Activated CD4-positive, alpha-beta T cell treated with anti-CD3 and anti-CD28 coated beads for 36 hours (primary cell): ENCODE measurements at regions of chr17 and their contacts with region 1.

Region 1: DNA sequence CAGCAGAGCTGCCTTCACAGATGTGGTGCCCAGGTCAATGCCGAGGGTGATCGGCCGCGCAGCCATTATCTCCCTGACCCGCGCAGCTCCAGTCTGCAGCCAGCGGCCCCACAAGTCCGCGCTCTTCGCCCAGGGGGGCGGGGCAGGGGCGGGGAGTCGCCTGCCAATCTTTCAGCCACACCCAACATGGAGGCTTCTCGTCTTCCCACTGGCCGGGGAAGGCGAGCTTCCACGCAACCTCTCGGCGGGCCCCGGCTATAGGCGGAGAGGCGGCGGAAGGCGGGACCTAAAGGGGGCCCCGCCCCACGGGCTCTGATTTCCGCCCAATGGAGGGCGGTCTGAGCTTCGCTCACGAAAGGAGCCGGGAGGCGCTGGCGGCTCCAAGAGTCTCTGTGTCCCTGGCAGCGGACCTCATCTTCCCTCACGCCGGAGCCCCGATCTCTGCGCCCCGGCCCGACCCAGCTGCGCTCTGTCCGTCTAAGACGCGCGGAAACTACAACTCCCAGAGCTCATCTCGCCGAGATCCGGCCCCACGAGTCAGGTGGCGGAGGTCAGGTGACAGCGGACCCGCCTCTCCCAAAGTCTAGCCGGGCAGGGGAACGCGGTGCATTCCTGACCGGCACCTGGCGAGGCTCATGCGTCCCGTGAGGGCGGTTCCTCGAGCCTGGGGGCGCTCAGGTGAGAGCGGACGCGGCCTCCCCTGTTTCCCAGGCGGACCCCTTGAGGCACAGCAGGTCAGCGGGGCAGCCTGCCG is at the starts of genes CTNS and SHPK:
- DNase-seq: peak; percentile 97
- ATAC-seq: peak; percentile 97
- H3K4me3 Mint-ChIP-seq: peak within 1 kb of the TSS; percentile 93
- H3K27ac Mint-ChIP-seq: peak within 1 kb of the TSS; percentile 99
- H3K4me1 Mint-ChIP-seq: peaks cover 42% of the 10 kb centered on the region
- H3K27me3 Mint-ChIP-seq: no peaks in the 10 kb centered on the region
- total RNA-seq, gene CTNS: 10.1 to 11.1 TPM
- total RNA-seq, gene SHPK: 12.5 to 15.0 TPM

Region 2: DNA sequence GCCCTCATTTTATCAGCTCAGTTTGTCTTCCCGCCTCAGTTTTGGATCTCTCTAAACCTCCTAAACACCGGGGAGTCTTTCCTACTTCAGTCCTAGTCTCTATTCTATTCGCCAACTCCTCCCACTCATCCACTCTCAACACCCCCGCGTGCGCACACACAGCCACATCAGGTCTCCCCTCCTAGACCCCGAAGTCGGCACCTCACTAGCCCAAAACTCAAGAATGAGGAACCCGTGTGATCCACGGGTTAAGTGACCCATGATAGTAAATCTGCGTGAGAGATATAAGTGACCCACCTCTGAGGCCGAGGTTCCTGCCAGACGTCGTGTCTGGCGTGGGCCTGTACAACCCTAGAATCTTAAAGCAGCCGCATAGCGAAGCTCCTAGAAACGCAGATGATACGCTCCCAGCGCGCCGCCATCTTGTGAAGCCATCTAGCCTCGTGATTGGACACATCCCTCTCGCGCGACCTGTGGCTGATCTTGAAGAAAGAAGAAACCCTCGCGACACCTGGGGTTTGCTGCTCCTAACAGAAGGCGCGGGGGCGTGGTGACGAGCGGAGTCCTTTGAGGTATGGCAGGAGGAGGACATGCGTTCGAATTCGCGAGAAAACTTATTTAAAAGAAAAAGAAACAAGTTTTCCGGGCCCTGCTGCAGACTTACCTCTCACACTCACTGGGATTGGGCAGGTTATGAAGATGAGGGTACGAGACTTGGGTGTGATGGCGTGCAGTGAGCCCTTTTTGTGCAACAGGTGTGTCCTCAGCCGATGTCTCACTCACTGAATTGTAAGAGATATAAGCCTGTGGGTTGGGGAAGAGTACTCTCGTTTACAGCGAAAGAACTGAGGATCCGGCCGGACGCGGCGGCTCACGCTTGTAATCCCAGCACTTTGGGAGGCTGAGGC is 1124.6 kb before region 1 on chr17 and contains the start of gene METTL16:
- CTCF ChIA-PET with region 1: no interaction called
- POLR2A ChIA-PET with region 1: no interaction called
- intact Hi-C with region 1: loop called in 1 of 2 experiments (anchors 5 kb)
- DNase-seq: peak; percentile 100
- ATAC-seq: peak; percentile 99
- H3K4me3 Mint-ChIP-seq: no peak within 1 kb of the TSS
- H3K27ac Mint-ChIP-seq: no peak within 1 kb of the TSS
- H3K4me1 Mint-ChIP-seq: peaks cover 17% of the 10 kb centered on the region
- H3K27me3 Mint-ChIP-seq: no peaks in the 10 kb centered on the region
- total RNA-seq, gene METTL16: 50.1 to 61.6 TPM

Region 3: DNA sequence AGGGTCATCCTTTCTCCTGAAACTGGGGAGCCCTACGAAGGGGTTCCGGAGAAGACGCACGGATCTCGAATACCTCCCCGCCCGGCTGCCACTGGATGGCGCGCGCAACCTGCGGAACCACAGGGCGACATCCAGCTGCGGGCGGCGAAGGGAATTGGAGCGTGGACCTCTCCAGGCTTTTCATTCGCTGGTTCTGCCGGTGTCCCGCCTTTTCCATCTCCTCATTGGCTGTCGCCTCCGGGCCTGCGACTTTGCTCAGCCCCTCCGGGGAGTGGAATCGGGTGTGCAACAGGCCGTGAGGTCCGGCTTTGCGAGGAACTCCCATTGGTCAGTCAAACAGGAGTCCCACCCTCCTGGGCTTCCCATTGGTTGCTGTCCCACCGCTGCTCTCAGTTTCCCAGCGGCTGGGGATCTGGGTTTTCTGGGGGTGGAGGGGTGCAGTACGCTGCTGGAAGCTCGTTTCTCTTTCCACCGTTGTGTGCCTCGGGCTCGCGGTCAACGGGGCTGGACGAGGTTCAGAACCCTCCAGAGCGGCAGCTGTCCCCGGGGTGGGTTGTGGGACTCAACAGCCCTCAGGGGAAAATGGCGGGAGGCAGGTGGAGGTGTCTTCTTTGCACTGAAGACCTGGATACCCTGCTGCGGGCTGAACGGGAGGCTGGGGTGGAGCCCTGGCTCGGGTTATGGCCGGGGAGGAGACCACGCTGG is 587.4 kb before region 1 on chr17:
- CTCF ChIA-PET with region 1: interaction called, 5 read pairs
- POLR2A ChIA-PET with region 1: no interaction called
- intact Hi-C with region 1: loop called in 1 of 2 experiments (anchors 5 kb)
- DNase-seq: peak; percentile 98
- ATAC-seq: peak; percentile 99
- H3K4me3 Mint-ChIP-seq: peak overlapping the region; percentile 86
- H3K27ac Mint-ChIP-seq: peak overlapping the region; percentile 83
- H3K4me1 Mint-ChIP-seq: peaks cover 4% of the 10 kb centered on the region
- H3K27me3 Mint-ChIP-seq: no peaks in the 10 kb centered on the region

Region 4: GRCh38 chr17:3647769-3648555 is 11.6 kb after region 1 on chr17:
- CTCF ChIA-PET with region 1: interaction called, 11 read pairs
- POLR2A ChIA-PET with region 1: no interaction called
- intact Hi-C with region 1: no loop called
- DNase-seq: peak; percentile 79
- ATAC-seq: peak; percentile 82
- H3K4me3 Mint-ChIP-seq: no peak overlapping the region
- H3K27ac Mint-ChIP-seq: peak overlapping the region; percentile 33
- H3K4me1 Mint-ChIP-seq: peaks cover 9% of the 10 kb centered on the region
- H3K27me3 Mint-ChIP-seq: no peaks in the 10 kb centered on the region

Region 5: DNA sequence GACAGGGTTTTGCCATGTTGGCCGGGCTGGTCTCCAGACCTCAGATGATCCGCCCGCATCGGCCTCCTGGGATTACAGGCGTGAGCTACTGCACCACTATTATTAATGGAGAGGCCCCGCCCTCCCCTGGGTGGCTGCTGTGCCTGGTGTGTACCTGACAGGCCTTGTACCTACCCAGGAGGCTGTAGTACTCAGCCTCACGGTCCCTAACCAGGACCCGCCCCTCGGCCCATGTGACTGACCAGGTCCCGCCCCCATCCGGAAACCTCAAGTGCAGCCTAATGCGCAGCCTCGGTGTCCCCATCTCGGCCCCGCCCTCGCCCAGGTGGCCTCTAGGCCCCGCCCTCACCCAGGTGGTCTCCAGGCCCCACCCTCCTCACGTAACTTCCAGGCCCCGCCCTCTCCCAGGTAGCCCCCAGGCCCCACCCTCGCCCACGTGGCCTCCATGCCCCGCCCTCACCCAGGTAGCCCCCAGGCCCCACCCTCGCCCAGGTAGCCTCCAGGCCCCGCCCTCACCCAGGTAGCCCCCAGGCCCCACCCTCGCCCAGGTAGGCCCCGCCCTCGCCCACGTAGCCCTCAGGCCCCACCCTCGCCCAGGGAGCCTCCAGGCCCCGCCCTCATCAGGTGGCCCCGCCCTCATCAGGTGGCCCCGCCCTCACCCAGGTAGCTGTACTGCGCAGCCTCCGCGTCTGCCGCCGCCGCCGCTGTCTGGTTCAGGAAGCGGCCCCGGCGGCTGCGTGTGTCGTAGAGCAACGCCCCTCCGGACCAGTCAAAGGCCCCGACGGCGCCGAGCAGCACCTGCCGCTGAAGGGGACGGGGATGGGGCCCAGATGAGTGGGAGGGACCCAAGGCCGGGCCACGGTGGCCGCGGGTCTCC is 118.4 kb after region 1 on chr17:
- CTCF ChIA-PET with region 1: no interaction called
- POLR2A ChIA-PET with region 1: no interaction called
- intact Hi-C with region 1: loop called in 1 of 2 experiments (anchors 1 kb)
- DNase-seq: peak; percentile 88
- ATAC-seq: peak; percentile 94
- H3K4me3 Mint-ChIP-seq: no peak overlapping the region
- H3K27ac Mint-ChIP-seq: no peak overlapping the region
- H3K4me1 Mint-ChIP-seq: peaks cover 21% of the 10 kb centered on the region
- H3K27me3 Mint-ChIP-seq: no peaks in the 10 kb centered on the region